GM13976 (cell line): ENCODE measurements at regions of chr2 and their contacts with region 1.

Region 1: GRCh38 chr2:197813093-197813787 is 8.8 kb downstream of the PLCL1 start:
- DNase-seq: no peak
- CTCF ChIP-seq: peak; percentile 46

Region 2: DNA sequence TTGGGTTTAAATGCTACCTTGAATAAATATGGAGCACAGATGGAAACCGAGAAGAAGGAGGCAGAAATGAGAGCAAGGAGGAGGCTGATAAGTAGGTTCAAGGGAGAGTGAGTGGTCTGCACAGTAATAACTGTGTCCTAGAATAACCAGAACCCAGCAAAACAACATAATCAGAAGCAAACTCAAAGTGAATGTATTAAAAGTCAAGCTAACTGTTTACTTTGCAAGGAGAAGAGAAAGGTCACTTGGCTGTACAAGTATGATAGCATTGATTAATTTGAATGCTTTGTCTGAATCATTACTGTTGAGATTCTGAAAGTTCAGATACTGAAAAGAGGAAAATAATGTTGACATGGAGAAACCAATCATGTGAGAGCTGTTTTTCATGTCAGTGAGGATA is 250.0 kb after region 1 on chr2:
- in situ Hi-C with region 1: no loop called
- DNase-seq: no peak
- CTCF ChIP-seq: no peak

Region 3: GRCh38 chr2:198296665-198297308 is 483.5 kb after region 1 on chr2:
- in situ Hi-C with region 1: loop called (anchors 10 kb)
- DNase-seq: peak; percentile 50
- CTCF ChIP-seq: peak; percentile 71